ENCODE measurements at regions of chr13 and their contacts with region 1.

Region 1: GRCh38 chr13:29935309-29935981 is 85.0 kb upstream of the UBL3 start:
- DNase-seq: no peak
- ATAC-seq: peak; percentile 51
- H3K4me3 Mint-ChIP-seq: no peak overlapping the region
- H3K27ac Mint-ChIP-seq: no peak overlapping the region
- H3K4me1 Mint-ChIP-seq: peaks cover 36% of the 10 kb centered on the region
- H3K27me3 Mint-ChIP-seq: peaks cover 32% of the 10 kb centered on the region
- CTCF ChIP-seq: no peak

Region 2: GRCh38 chr13:29369060-29369743 is 566.2 kb before region 1 on chr13:
- CTCF ChIA-PET with region 1: no interaction called
- POLR2A ChIA-PET with region 1: no interaction called
- DNase-seq: no peak
- ATAC-seq: peak; percentile 78
- H3K4me3 Mint-ChIP-seq: no peak overlapping the region
- H3K27ac Mint-ChIP-seq: no peak overlapping the region
- H3K4me1 Mint-ChIP-seq: peaks cover 3% of the 10 kb centered on the region; the same call in 1 of the 2 replicates
- H3K27me3 Mint-ChIP-seq: peaks cover 4% of the 10 kb centered on the region; the same call in 1 of the 2 replicates
- CTCF ChIP-seq: 0 out of 2 replicates have a peak, but pooled peaks have one; percentile 20

Region 3: GRCh38 chr13:29923554-29924481 is 11.6 kb before region 1 on chr13:
- CTCF ChIA-PET with region 1: interaction called, 24 read pairs
- POLR2A ChIA-PET with region 1: no interaction called
- DNase-seq: peak; percentile 71
- ATAC-seq: peak; percentile 94
- H3K4me3 Mint-ChIP-seq: no peak overlapping the region
- H3K27ac Mint-ChIP-seq: no peak overlapping the region
- H3K4me1 Mint-ChIP-seq: peaks cover 18% of the 10 kb centered on the region
- H3K27me3 Mint-ChIP-seq: peaks cover 16% of the 10 kb centered on the region
- CTCF ChIP-seq: peak; percentile 89

Measured in WTC11 (cell line).